ENCODE measurements at regions of chr4 and their contacts with region 1.

Region 1: GRCh38 chr4:77862478-77863216 is at the start of gene MRPL1:
- DNase-seq: peak; percentile 75 to 94 (median 80)
- ATAC-seq: peak; percentile 94
- H3K4me3 ChIP-seq: peak within 1 kb of the TSS; percentile 87
- H3K27ac ChIP-seq: peak within 1 kb of the TSS; percentile 88
- H3K4me1 ChIP-seq: peaks cover 0 to 5% of the 10 kb centered on the region in 2 experiments; a peak in 2 of 5 replicates
- H3K27me3 ChIP-seq: no peaks in the 10 kb centered on the region
- CTCF ChIP-seq: no peak
- EP300 ChIP-seq: peak; percentile 68
- POLR2A ChIP-seq: peak; percentile 96
- RAD21 ChIP-seq: peak; percentile 2 to 5; a peak in 1 of 4 replicates
- polyA plus RNA-seq, gene MRPL1: 65.4 to 75.7 TPM

Region 2: GRCh38 chr4:77681792-77682191 is 180.9 kb before region 1 on chr4:
- CTCF ChIA-PET with region 1: no interaction called
- POLR2A ChIA-PET with region 1: no interaction called
- in situ Hi-C with region 1: no loop called
- intact Hi-C with region 1: loop called (anchors 5 kb)
- DNase-seq: peak in 1 of 4 experiments; percentile 9
- ATAC-seq: no peak
- H3K4me3 ChIP-seq: no peak overlapping the region
- H3K27ac ChIP-seq: no peak overlapping the region
- H3K4me1 ChIP-seq: no peaks in the 10 kb centered on the region
- H3K27me3 ChIP-seq: peaks cover 0 to 3% of the 10 kb centered on the region in 2 experiments; a peak in 2 of 5 replicates
- CTCF ChIP-seq: no peak
- EP300 ChIP-seq: no peak
- POLR2A ChIP-seq: no peak
- RAD21 ChIP-seq: no peak

Measured in K562 (cell line).